Dorsolateral prefrontal cortex (tissue), 120 donors: ENCODE measurements at regions of chr13 and their contacts with region 1.

Region 1: GRCh38 chr13:52809310-52809769 is 39.1 kb downstream of the PCDH8 start:
- DNase-seq: peak in 8 of 10 donors; percentile 8 to 75 (median 58)
- H3K4me3 ChIP-seq: no peak overlapping the region
- H3K27ac ChIP-seq: no peak overlapping the region
- H3K27me3 ChIP-seq: peaks cover 0 to 4% (median 0%) of the 10 kb centered on the region in 45 donors
- CTCF ChIP-seq: peak in 55 of 56 donors; percentile 49 to 90 (median 71)

Region 2: GRCh38 chr13:52599848-52600603 is 209.3 kb before region 1 on chr13:
- intact Hi-C with region 1: no loop called
- DNase-seq: peak in 5 of 10 donors; percentile 14 to 64 (median 53)
- H3K4me3 ChIP-seq: peak overlapping the region; percentile 21 to 84 (median 61)
- H3K27ac ChIP-seq: peak overlapping the region in 31 of 59 donors; percentile 20 to 87 (median 63)
- H3K27me3 ChIP-seq: peaks cover 0 to 19% (median 0%) of the 10 kb centered on the region in 45 donors
- CTCF ChIP-seq: peak in 1 of 56 donors; percentile 18

Region 3: DNA sequence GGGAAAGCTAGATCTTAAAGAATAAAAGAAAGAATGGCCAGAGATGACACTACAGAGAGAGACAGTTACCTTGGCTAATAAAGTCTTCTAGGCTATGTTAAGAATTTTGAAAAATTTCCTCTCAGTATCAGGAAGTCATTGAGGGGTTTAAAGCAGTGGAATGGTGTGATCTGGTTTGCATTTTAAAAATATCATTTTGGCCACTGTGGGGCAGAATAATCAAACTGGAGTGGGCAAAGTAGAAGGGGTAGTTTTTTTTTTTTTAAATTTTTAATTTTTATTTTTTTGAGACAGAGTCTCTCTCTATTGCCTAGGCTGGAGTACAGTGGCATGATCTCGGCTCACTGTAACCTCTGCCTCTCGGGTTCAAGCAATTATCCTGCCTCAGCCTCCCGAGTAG is 65.4 kb before region 1 on chr13:
- intact Hi-C with region 1: loop called (anchors 2 to 5 kb)
- DNase-seq: no peak
- H3K4me3 ChIP-seq: no peak overlapping the region
- H3K27ac ChIP-seq: no peak overlapping the region
- H3K27me3 ChIP-seq: peaks cover 0 to 13% (median 4%) of the 10 kb centered on the region in 45 donors
- CTCF ChIP-seq: peak in 47 of 56 donors; percentile 14 to 58 (median 41)